CD8-positive, alpha-beta T cell (primary cell): ENCODE measurements at regions of chr1 and their contacts with region 1.

Region 1: GRCh38 chr1:173824331-173825081 is at the starts of genes CENPL and DARS2:
- DNase-seq: peak; percentile 79 to 97 (median 90)
- ATAC-seq: peak; percentile 86
- H3K4me3 ChIP-seq: peak within 1 kb of the TSS; percentile 92 to 97
- H3K4me3 Mint-ChIP-seq: peak within 1 kb of the TSS; percentile 93
- H3K27ac ChIP-seq: peak within 1 kb of the TSS; percentile 78 to 87
- H3K27ac Mint-ChIP-seq: peak within 1 kb of the TSS; percentile 90
- H3K4me1 ChIP-seq: peaks cover 11% of the 10 kb centered on the region
- H3K4me1 Mint-ChIP-seq: peaks cover 54% of the 10 kb centered on the region
- H3K27me3 ChIP-seq: no peaks in the 10 kb centered on the region
- H3K27me3 Mint-ChIP-seq: no peaks in the 10 kb centered on the region
- CTCF ChIP-seq: no peak
- total RNA-seq, gene CENPL: 4.0 to 5.7 TPM
- total RNA-seq, gene DARS2: 1.5 to 1.6 TPM

Region 2: GRCh38 chr1:172837816-172838680 is 986.5 kb before region 1 on chr1:
- CTCF ChIA-PET with region 1: no interaction called
- POLR2A ChIA-PET with region 1: no interaction called
- intact Hi-C with region 1: loop called in 1 of 2 experiments (anchors 10 kb)
- DNase-seq: peak in 3 of 9 experiments; percentile 28 to 83 (median 73)
- ATAC-seq: peak; percentile 98
- H3K4me3 ChIP-seq: no peak overlapping the region
- H3K4me3 Mint-ChIP-seq: no peak overlapping the region
- H3K27ac ChIP-seq: no peak overlapping the region
- H3K27ac Mint-ChIP-seq: no peak overlapping the region
- H3K4me1 ChIP-seq: peaks cover 13% of the 10 kb centered on the region
- H3K4me1 Mint-ChIP-seq: peaks cover 19% of the 10 kb centered on the region
- H3K27me3 ChIP-seq: no peaks in the 10 kb centered on the region
- H3K27me3 Mint-ChIP-seq: no peaks in the 10 kb centered on the region
- CTCF ChIP-seq: no peak

Region 3: GRCh38 chr1:172969611-172970010 is 854.9 kb before region 1 on chr1:
- CTCF ChIA-PET with region 1: no interaction called
- POLR2A ChIA-PET with region 1: no interaction called
- intact Hi-C with region 1: no loop called
- DNase-seq: no peak
- ATAC-seq: no peak
- H3K4me3 ChIP-seq: no peak overlapping the region
- H3K4me3 Mint-ChIP-seq: no peak overlapping the region
- H3K27ac ChIP-seq: no peak overlapping the region
- H3K27ac Mint-ChIP-seq: no peak overlapping the region
- H3K4me1 ChIP-seq: no peaks in the 10 kb centered on the region
- H3K4me1 Mint-ChIP-seq: no peaks in the 10 kb centered on the region
- H3K27me3 ChIP-seq: no peaks in the 10 kb centered on the region
- H3K27me3 Mint-ChIP-seq: no peaks in the 10 kb centered on the region
- CTCF ChIP-seq: no peak

Region 4: DNA sequence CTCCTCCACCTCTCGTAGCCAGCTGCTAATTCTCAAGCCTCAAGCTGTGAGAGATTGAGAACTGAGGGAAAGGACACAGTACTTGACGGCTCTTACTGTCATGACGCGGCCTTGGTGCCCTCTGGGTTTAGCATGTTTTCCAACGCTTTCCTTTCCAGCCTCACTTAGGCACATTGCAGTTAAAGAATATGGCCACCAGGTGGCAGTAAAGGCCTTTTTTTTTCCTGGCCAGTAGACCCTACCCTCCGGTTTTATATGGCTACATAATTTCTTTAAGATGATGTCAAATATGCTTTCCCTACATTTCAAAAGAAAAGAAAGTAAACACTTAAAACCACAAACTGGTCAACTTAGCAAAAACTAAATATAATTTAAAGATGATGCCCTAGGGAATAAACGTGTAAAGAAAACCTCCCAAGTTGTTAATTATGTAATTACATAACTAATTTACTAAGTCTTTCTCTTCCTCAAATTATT is 404.1 kb before region 1 on chr1:
- CTCF ChIA-PET with region 1: interaction called, 15 read pairs
- POLR2A ChIA-PET with region 1: no interaction called
- intact Hi-C with region 1: loop called (anchors 1 kb)
- DNase-seq: peak; percentile 23 to 83 (median 52)
- ATAC-seq: peak; percentile 96
- H3K4me3 ChIP-seq: no peak overlapping the region
- H3K4me3 Mint-ChIP-seq: no peak overlapping the region
- H3K27ac ChIP-seq: no peak overlapping the region
- H3K27ac Mint-ChIP-seq: no peak overlapping the region
- H3K4me1 ChIP-seq: peaks cover 8% of the 10 kb centered on the region
- H3K4me1 Mint-ChIP-seq: peaks cover 7% of the 10 kb centered on the region
- H3K27me3 ChIP-seq: no peaks in the 10 kb centered on the region
- H3K27me3 Mint-ChIP-seq: no peaks in the 10 kb centered on the region
- CTCF ChIP-seq: peak; percentile 88

Region 5: DNA sequence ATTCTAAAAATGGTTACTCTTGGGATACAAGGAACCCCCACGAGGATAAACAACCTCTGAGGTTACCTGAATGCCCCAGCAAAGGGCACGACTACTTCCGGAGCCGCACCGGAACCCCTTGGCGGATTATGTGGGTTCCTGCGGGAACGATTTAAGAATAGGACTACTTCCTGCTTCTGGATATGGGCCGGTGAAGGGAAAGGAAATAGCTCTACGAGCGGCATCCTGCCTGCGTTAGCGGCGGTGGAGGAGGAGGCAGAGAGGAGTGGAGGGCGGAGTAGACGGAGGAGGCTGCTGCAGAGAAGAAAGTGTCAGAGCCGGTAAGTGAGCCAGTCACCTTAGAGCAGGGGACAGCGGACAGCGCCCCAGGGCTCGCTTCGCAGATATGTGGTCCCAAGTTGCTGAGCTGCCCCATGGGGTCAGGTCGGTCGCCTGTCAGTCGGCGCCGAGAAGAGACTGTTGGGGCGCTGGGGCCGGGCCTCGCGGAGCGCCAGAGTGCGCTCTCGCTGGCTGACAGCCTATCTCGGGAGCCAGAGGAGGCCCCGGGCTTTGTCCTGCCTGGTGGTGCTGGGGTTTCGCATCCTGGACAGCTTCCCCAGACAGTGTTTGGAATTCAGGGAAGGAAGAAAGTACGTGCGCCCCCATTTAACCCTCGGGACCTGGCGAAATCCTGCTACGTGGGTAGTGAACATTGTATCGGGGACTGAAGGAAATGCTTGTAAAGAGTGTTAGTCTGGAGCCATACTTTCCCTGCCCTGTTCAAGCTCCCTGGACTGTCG is 109.6 kb before region 1 on chr1 and contains the start of gene KLHL20:
- CTCF ChIA-PET with region 1: interaction called, 3 read pairs
- POLR2A ChIA-PET with region 1: interaction called, 11 read pairs
- intact Hi-C with region 1: loop called (anchors 1 kb)
- DNase-seq: peak; percentile 72 to 94 (median 83)
- ATAC-seq: peak; percentile 98
- H3K4me3 ChIP-seq: peak within 1 kb of the TSS; percentile 80 to 86
- H3K4me3 Mint-ChIP-seq: peak within 1 kb of the TSS; percentile 96
- H3K27ac ChIP-seq: peak within 1 kb of the TSS; percentile 76 to 87
- H3K27ac Mint-ChIP-seq: peak within 1 kb of the TSS; percentile 97
- H3K4me1 ChIP-seq: peaks cover 24% of the 10 kb centered on the region
- H3K4me1 Mint-ChIP-seq: peaks cover 38% of the 10 kb centered on the region
- H3K27me3 ChIP-seq: peaks cover 0 to 2% of the 10 kb centered on the region in 2 experiments
- H3K27me3 Mint-ChIP-seq: peaks cover 7% of the 10 kb centered on the region
- CTCF ChIP-seq: no peak
- total RNA-seq, gene KLHL20: 27.9 to 29.0 TPM

Region 6: DNA sequence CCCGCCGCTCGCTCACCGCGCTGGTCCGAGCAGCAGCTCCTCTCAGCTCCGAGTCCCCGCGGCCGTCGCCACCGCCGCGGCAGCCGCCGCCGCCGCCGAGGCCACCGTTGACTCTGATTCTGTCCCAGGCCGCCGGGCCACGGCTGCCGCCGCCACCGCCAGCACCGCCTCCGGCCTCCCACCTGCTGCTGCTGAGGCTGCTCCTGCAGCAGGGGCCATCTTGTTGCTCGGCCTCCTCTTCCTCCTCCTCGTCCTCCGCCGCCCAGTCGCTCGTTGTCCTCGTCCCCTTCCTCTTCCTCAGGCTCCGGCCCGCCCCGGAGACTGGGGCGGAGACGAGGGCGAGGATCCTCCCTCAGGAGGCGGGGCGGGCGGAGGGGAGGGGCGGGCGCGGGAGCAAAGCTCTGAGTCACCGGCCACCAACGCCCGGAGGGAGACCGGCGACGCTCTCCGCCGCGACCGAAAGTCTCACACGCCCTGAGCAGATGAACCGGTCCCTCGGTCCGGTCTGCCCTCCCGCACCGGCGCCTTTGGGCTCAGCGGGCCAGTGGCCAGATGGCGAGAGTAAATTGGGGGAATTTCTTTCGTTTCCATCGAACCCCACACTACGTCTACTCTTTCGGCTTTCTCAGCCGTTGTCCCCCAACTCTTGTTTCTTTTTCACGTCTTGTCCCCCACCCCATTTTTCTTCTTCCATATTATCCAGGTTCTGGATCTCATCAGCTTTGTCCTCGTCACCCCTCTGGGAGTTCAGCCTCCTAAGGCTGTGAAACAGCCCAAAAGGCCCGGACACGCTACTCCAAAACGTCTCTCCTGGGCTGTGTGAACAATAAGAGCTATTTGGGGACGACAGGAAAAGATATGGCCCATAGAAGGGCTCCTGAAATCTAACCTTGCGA is 197.8 kb after region 1 on chr1 and contains the start of gene RC3H1:
- CTCF ChIA-PET with region 1: no interaction called
- POLR2A ChIA-PET with region 1: interaction called, 6 read pairs
- intact Hi-C with region 1: loop called (anchors 1 to 5 kb)
- DNase-seq: peak; percentile 79 to 93 (median 89)
- ATAC-seq: peak; percentile 95
- H3K4me3 ChIP-seq: peak within 1 kb of the TSS; percentile 83 to 94
- H3K4me3 Mint-ChIP-seq: peak within 1 kb of the TSS; percentile 95
- H3K27ac ChIP-seq: peak within 1 kb of the TSS; percentile 84 to 93
- H3K27ac Mint-ChIP-seq: peak within 1 kb of the TSS; percentile 98
- H3K4me1 ChIP-seq: peaks cover 30% of the 10 kb centered on the region
- H3K4me1 Mint-ChIP-seq: peaks cover 45% of the 10 kb centered on the region
- H3K27me3 ChIP-seq: no peaks in the 10 kb centered on the region
- H3K27me3 Mint-ChIP-seq: no peaks in the 10 kb centered on the region
- CTCF ChIP-seq: no peak
- total RNA-seq, gene RC3H1: 40.2 to 41.4 TPM

Region 7: GRCh38 chr1:174159252-174160108 is 335.0 kb after region 1 on chr1 and contains the start of gene RABGAP1L:
- CTCF ChIA-PET with region 1: no interaction called
- POLR2A ChIA-PET with region 1: no interaction called
- intact Hi-C with region 1: loop called (anchors 1 to 2 kb)
- DNase-seq: peak; percentile 90 to 98 (median 93)
- ATAC-seq: peak; percentile 90
- H3K4me3 ChIP-seq: peak within 1 kb of the TSS; percentile 73 to 74
- H3K4me3 Mint-ChIP-seq: peak within 1 kb of the TSS; percentile 91
- H3K27ac ChIP-seq: peak within 1 kb of the TSS; percentile 73 to 93
- H3K27ac Mint-ChIP-seq: peak within 1 kb of the TSS; percentile 96
- H3K4me1 ChIP-seq: peaks cover 16% of the 10 kb centered on the region
- H3K4me1 Mint-ChIP-seq: peaks cover 53% of the 10 kb centered on the region
- H3K27me3 ChIP-seq: no peaks in the 10 kb centered on the region
- H3K27me3 Mint-ChIP-seq: no peaks in the 10 kb centered on the region
- CTCF ChIP-seq: no peak
- total RNA-seq, gene RABGAP1L: 60.7 to 65.1 TPM